Motor neuron (in vitro differentiated cells): ENCODE measurements at regions of chr3 and their contacts with region 1.

Region 1: DNA sequence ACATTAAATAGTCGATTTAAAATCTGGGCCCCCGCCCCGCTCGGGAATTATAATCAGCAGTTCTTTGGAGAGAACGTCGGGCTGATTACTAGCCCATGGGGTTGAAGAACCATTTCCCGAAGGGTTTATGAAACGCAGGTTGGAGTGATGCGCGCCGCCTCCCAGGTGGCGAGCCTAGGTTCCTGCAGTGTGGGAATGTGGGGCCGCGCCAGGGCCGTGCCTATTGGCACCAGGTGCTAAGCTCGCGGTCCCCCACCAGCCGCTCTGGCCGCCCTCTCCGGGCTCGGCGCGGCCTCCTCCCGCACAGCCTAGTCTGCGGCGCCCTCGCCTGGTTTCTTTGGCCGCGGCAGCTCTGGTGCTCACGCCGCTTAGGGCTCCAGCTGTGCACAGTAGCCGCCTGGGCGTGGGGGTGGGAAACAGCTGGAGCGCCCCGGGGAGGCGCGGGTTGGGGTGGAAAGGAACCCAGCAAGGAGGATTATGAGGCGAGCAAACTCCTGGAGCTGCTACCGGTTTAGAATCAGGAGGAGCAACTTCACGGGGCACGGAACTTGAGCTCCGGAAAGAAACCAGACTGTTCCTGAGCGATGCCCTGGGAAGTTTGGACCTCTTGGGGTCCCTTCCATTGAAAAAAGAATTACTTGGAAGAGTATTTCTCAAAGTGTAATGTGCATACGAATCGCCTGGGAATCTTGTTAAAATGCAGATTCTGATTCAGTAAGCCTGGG is 5.6 kb upstream of the MECOM start:
- ATAC-seq: peak; percentile 95 to 99 (median 98)
- H3K4me3 ChIP-seq: peak overlapping the region; percentile 36 to 48 (median 39)
- H3K27ac ChIP-seq: no peak overlapping the region
- H3K4me1 ChIP-seq: peaks cover 14 to 15% of the 10 kb centered on the region in 2 donors

Region 2: GRCh38 chr3:169173244-169174015 is 495.7 kb before region 1 on chr3:
- in situ Hi-C with region 1: loop called in 1 of 9 experiments (anchors 25 kb)
- ATAC-seq: no peak
- H3K4me3 ChIP-seq: no peak overlapping the region
- H3K27ac ChIP-seq: no peak overlapping the region
- H3K4me1 ChIP-seq: no peaks in the 10 kb centered on the region

Region 3: DNA sequence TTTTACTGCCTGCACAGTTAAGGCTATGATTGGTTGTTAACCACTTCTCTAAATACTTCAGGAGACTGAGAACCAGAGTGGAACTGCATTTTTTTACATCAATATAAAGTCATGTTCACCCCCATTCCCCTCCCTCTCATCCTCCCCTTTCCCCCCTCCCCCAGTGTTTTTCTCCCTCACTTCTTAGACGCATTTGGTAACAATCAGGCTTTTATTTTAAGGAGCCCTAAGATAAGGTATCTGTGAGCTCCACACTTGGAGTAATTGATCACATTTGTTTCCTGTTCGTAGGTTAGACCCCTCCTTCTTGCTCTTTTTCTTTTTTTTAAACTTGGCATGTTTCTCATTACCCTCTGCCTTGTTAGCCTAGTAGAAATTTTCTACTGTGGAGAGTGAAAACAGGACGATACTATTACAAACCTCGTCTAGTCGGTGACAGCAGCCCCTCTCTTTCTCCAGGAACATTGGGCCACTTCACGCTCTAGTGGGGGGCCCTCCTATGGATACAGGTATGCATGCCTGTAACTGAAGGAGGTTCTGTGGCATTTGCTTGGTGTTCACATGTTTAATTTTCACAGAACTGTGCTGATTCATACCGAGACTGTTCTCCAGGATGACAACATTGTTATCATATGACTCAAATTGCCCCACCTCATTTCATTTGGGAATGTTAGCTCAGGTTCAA is 320.0 kb before region 1 on chr3:
- in situ Hi-C with region 1: loop called in 1 of 9 experiments (anchors 25 kb)
- ATAC-seq: peak in 7 of 8 experiments; percentile 29 to 85 (median 59)
- H3K4me3 ChIP-seq: no peak overlapping the region
- H3K27ac ChIP-seq: no peak overlapping the region
- H3K4me1 ChIP-seq: peaks cover 0 to 15% of the 10 kb centered on the region in 2 donors

Region 4: DNA sequence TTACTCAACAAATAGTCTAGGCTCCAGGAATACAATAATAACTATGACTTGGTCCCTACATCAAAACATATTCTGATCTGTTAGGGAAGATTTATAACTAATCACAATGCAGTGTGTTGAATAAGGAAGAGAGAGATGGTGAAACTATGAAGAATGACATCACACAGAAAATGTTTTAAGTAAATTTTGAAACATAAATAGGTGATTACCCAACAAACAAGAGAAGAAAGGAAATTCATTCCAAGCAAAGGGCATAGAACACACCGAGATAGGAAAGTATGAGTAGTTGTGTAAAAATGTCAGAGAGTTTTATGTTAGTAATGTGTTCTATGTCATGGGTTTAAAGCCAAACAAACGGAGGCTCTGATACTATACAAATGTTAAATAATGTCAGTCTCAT is 310.9 kb after region 1 on chr3:
- in situ Hi-C with region 1: no loop called
- ATAC-seq: no peak
- H3K4me3 ChIP-seq: no peak overlapping the region
- H3K27ac ChIP-seq: no peak overlapping the region
- H3K4me1 ChIP-seq: no peaks in the 10 kb centered on the region